Activated CD4-positive, alpha-beta memory T cell treated with anti-CD3 and anti-CD28 coated beads for 36 hours (primary cell): ENCODE measurements at regions of chr12 and their contacts with region 1.

Region 1: GRCh38 chr12:1583421-1584078 is 10.8 kb downstream of the FBXL14 start:
- DNase-seq: peak; percentile 75
- H3K4me3 Mint-ChIP-seq: no peak overlapping the region
- H3K27ac Mint-ChIP-seq: no peak overlapping the region
- H3K4me1 Mint-ChIP-seq: peaks cover 17% of the 10 kb centered on the region
- H3K27me3 Mint-ChIP-seq: no peaks in the 10 kb centered on the region

Region 2: GRCh38 chr12:1093166-1093751 is 490.3 kb before region 1 on chr12:
- CTCF ChIA-PET with region 1: interaction called, 10 read pairs
- POLR2A ChIA-PET with region 1: no interaction called
- intact Hi-C with region 1: no loop called
- DNase-seq: peak; percentile 18
- H3K4me3 Mint-ChIP-seq: no peak overlapping the region
- H3K27ac Mint-ChIP-seq: no peak overlapping the region
- H3K4me1 Mint-ChIP-seq: peaks cover 11% of the 10 kb centered on the region
- H3K27me3 Mint-ChIP-seq: no peaks in the 10 kb centered on the region

Region 3: GRCh38 chr12:1517007-1517406 is 66.5 kb before region 1 on chr12:
- CTCF ChIA-PET with region 1: interaction called, 13 read pairs
- POLR2A ChIA-PET with region 1: no interaction called
- intact Hi-C with region 1: loop called (anchors 5 kb)
- DNase-seq: no peak
- H3K4me3 Mint-ChIP-seq: no peak overlapping the region
- H3K27ac Mint-ChIP-seq: no peak overlapping the region
- H3K4me1 Mint-ChIP-seq: no peaks in the 10 kb centered on the region
- H3K27me3 Mint-ChIP-seq: peaks cover 11% of the 10 kb centered on the region

Region 4: DNA sequence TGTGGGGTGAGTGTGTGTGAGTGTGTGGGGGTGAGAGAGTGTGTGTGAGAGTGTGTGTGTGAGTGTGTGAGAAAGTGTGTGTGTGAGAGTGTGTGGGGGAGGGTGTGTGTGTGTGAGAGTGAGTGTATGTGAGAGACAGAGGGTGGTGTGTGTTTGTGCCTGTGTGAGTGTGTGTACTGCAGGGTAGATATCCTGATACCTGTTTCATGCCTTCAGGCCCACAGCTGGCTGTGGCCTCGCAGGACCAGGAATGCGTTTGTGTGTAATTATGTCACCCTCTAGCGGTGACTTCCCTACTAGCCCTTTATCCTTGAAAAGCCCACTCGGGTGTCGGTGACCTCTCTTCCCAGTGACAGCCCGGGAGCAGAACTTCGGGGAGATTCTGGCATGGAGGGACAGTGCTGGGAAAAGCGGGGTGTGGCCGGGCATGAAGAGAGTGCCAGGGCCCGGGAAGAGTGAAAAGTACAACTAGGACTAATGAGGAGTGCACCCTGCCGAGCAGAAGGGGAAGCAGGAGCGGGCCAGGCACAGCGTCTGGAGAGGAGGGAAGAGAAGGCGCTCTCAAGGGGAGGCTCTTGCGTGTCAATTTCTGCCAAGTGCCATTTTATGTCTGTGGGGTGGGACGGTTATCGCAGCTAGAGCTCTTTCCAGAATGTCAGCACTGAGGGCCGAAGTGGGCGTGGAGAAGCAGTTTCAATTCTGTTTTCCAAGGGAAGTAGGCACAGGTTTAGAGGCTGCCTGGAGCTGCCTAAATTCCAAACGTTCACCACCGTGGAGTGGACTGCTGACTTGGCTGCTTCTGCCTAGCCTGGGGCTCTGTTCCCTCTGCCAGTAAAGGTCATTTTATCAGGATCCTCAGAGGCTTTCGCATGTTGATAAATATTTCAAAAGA is 21.8 kb after region 1 on chr12:
- CTCF ChIA-PET with region 1: interaction called, 27 read pairs
- POLR2A ChIA-PET with region 1: no interaction called
- intact Hi-C with region 1: no loop called
- DNase-seq: peak; percentile 67
- H3K4me3 Mint-ChIP-seq: peak overlapping the region; percentile 74
- H3K27ac Mint-ChIP-seq: peak overlapping the region; percentile 25
- H3K4me1 Mint-ChIP-seq: peaks cover 30% of the 10 kb centered on the region
- H3K27me3 Mint-ChIP-seq: no peaks in the 10 kb centered on the region

Region 5: GRCh38 chr12:1732914-1733313 is 149.4 kb after region 1 on chr12:
- CTCF ChIA-PET with region 1: no interaction called
- POLR2A ChIA-PET with region 1: no interaction called
- intact Hi-C with region 1: no loop called
- DNase-seq: no peak
- H3K4me3 Mint-ChIP-seq: no peak overlapping the region
- H3K27ac Mint-ChIP-seq: no peak overlapping the region
- H3K4me1 Mint-ChIP-seq: peaks cover 17% of the 10 kb centered on the region
- H3K27me3 Mint-ChIP-seq: no peaks in the 10 kb centered on the region